G401 (cell line): ENCODE measurements at regions of chr20 and their contacts with region 1.

Region 1: GRCh38 chr20:49479785-49480184 is 2.7 kb downstream of the KCNB1 start:
- DNase-seq: peak; percentile 69

Region 2: GRCh38 chr20:49424536-49424935 is 55.2 kb before region 1 on chr20:
- in situ Hi-C with region 1: loop called (anchors 5 kb)
- DNase-seq: peak; percentile 39